ENCODE measurements at regions of chr1 and their contacts with region 1.

Region 1: DNA sequence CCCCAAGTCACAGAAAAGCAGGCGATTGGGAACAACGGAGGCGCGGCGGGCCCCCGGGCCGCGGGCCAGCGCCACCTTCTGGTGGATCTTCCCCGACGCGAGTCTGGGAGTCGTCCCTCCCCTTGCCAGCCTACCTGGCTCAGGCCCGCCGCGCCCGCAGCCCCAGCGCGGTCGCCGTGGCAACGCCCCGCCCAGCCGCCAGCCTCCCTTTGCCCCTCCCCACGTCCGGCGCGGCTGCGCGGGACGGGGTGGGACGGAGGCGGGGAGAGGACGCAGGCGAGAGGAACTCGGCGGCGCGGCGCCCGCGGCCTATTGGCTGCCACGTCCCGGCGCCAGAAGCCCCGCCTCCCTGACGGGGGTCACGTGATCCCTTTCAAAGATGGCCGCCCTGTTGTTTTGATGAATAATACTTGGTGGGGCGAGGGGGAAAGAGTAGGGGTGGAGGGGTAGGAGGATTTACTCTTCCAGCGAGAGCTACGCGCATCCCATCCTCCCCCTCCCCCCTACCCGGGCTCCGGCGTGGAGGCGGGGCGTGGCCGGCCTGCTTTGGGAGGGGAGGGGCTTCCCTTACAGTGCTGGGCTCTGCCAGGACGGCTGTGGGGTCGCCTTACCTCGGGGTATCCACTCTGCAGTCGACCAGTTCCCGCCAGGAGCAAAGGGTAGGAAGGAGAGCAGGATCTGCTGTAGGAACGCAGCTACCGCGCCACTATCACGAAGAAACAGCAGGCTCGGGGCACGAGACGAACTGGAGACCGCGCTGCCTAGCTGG is at the start of gene UBE4B:
- DNase-seq: peak; percentile 97 to 99
- H3K4me3 ChIP-seq: peak within 1 kb of the TSS; percentile 82 to 100
- H3K27ac ChIP-seq: peak within 1 kb of the TSS; percentile 96 to 99
- H3K4me1 ChIP-seq: peaks cover 0 to 40% (median 13%) of the 10 kb centered on the region in 4 donors
- H3K27me3 ChIP-seq: no peaks in the 10 kb centered on the region
- CTCF ChIP-seq: peak; percentile 77 to 78

Region 2: GRCh38 chr1:10108134-10108663 is 75.4 kb after region 1 on chr1:
- intact Hi-C with region 1: loop called (anchors 2 kb)
- DNase-seq: no peak
- H3K4me3 ChIP-seq: peak overlapping the region; percentile 18 to 22
- H3K27ac ChIP-seq: peak overlapping the region; percentile 80 to 82
- H3K4me1 ChIP-seq: peaks cover 0 to 54% (median 26%) of the 10 kb centered on the region in 4 donors
- H3K27me3 ChIP-seq: no peaks in the 10 kb centered on the region
- CTCF ChIP-seq: no peak

Region 3: GRCh38 chr1:10152709-10153284 is 120.0 kb after region 1 on chr1:
- intact Hi-C with region 1: loop called (anchors 5 kb)
- DNase-seq: peak; percentile 32 to 75
- H3K4me3 ChIP-seq: no peak overlapping the region
- H3K27ac ChIP-seq: peak overlapping the region in 1 of 2 donors; percentile 36
- H3K4me1 ChIP-seq: peaks cover 0 to 38% (median 9%) of the 10 kb centered on the region in 4 donors
- H3K27me3 ChIP-seq: no peaks in the 10 kb centered on the region
- CTCF ChIP-seq: peak; percentile 65 to 67

Measured in tibial artery (tissue), 4 donors.